Activated CD4-positive, alpha-beta T cell treated with anti-CD3 and anti-CD28 coated beads for 36 hours (primary cell): ENCODE measurements at regions of chr1 and their contacts with region 1.

Region 1: GRCh38 chr1:9181176-9181906 is 52.4 kb upstream of the GPR157 start:
- DNase-seq: peak; percentile 84
- ATAC-seq: peak; percentile 65
- H3K4me3 Mint-ChIP-seq: peak overlapping the region; percentile 74
- H3K27ac Mint-ChIP-seq: peak overlapping the region; percentile 72
- H3K4me1 Mint-ChIP-seq: peaks cover 7% of the 10 kb centered on the region
- H3K27me3 Mint-ChIP-seq: peaks cover 32% of the 10 kb centered on the region

Region 2: DNA sequence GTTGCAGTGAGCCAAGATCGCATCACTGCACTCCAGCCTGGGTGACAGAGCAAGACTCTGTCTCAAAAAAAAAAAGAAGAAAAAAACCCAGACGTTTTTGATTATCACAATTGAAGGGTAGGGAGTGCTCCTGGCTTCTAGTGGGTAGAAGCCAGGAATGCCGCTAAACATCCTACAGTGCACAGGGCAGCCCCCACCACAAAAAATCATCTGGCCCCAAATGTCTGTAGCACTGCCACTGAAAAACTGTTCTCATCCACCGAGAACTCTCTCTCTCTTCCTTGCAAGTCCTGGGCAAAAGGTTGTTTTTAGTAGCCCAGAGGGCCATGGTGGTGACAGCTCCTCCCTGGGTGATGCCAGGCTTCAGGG is 16.8 kb before region 1 on chr1:
- CTCF ChIA-PET with region 1: interaction called, 3 read pairs
- POLR2A ChIA-PET with region 1: no interaction called
- intact Hi-C with region 1: loop called in 1 of 2 experiments (anchors 2 kb)
- DNase-seq: no peak
- ATAC-seq: no peak
- H3K4me3 Mint-ChIP-seq: no peak overlapping the region
- H3K27ac Mint-ChIP-seq: no peak overlapping the region
- H3K4me1 Mint-ChIP-seq: peaks cover 12% of the 10 kb centered on the region
- H3K27me3 Mint-ChIP-seq: peaks cover 4% of the 10 kb centered on the region

Region 3: DNA sequence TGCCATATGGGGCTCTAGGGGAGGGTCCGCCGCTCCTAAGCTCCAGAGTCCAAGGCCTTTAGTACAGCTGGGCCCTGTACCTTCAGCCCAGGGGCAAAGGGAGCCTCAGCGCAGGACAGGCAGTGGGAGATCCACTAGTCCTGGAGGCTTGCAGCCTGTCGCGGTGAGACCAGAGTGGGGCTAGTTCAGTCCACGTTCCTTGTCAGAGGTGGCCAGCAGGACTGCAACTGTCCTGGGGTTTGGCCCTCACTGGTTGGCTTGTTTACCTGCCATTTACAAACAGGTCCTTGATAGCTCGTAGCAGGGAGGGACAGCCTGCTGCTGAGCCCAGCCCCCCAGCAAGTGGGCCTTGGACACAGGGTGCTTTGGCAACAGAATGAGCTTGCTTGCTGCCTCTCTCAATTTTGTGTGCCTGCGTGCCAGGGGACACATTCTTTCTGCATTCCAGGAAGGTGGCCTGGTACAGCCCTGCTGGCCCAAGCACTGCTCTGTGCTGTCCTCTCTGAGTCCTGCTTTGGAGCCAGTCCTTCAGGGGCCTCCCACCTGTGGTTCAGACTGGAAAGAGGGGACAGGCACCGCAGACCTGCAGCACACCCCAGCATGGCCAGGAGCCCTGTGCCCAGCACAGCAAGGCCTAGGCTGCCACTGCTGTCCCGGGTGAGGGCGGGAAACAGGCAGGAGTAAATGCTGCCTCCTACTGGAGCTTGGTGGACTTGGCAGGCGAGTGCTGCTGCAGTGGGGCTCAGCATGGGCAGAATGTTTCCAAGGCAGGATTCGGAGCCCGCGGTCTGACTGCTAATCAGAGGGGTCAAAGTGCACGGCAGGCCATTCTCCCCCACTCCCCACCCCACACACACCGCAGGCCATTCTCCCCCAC is 68.4 kb after region 1 on chr1:
- CTCF ChIA-PET with region 1: no interaction called
- POLR2A ChIA-PET with region 1: no interaction called
- intact Hi-C with region 1: loop called in 1 of 2 experiments (anchors 1 kb)
- DNase-seq: peak; percentile 68
- ATAC-seq: peak; percentile 79
- H3K4me3 Mint-ChIP-seq: no peak overlapping the region
- H3K27ac Mint-ChIP-seq: no peak overlapping the region
- H3K4me1 Mint-ChIP-seq: peaks cover 6% of the 10 kb centered on the region
- H3K27me3 Mint-ChIP-seq: no peaks in the 10 kb centered on the region